ENCODE measurements at regions of chr1 and their contacts with region 1.

Region 1: DNA sequence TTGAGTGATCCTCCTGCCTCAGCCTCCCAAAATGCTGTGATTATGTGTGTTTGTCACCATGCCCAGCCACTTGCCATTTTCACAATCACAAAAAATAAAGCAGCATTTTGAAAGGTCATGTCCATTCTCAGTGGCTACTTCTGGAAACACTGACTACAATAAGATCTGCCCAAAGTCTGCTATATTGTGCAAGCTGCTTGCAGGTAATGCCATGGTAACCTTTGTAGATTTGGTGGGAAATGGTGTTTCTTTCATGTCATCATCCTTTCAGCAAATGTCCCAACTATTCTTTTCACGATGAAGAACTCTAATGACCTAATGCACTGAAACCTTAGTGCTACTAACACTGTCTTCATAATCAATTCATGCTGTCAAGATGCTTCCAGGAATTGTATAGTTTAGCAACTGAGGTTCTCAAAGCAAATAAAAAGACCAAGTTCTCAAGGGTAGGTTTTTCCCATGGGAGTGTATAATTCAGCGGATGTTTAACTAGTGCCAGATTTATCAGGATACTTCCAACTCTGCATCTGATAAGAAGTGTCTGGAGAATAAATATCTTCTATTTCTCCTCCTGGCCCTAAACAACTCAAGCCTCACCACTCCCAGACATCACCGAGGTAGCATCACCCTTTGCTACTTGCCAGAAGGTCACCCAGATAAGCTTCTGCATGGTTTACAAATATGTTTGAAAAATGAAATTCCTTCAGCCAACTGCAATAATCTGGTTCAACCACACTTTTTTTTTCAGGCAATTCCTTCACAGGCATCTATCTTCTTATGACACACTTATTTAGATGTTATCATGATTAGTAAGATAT is 132.0 kb upstream of the ZC3H11B start:
- DNase-seq: no peak
- ATAC-seq: no peak
- H3K4me3 ChIP-seq: no peak overlapping the region
- H3K27ac ChIP-seq: no peak overlapping the region
- H3K4me1 ChIP-seq: no peaks in the 10 kb centered on the region
- H3K27me3 ChIP-seq: no peaks in the 10 kb centered on the region
- CTCF ChIP-seq: no peak

Region 2: DNA sequence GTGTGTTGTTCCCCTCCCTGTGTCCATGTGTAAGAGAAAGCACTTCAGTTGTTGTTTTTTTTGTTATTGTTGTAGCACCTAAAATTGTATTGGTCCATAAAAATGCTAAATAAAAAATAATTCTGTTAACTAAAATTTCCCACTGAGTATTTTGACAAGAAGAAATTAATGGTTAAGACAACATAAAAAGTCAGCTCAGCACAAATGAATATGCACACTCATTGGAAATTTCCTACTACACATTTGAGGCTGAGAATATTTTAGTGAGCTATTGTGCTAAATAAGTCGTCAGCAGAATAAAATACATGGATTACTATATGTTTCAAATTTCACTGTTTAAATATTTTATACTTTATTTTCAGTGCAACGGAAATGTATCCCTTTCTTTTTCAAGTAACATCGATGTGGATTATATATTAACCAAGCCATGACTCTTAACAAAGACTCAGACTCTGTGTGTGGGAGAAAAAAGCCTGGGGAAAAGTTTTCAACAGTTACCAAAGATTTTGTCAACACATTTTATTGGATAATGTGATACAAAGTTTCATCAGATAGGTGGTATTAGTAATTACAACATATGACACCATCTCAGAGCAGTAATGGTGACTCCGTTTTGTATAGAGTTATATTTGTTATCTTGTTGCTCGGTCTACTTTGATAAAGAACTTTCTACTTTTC is 507.8 kb before region 1 on chr1:
- CTCF ChIA-PET with region 1: no interaction called
- POLR2A ChIA-PET with region 1: interaction called, 10 read pairs
- intact Hi-C with region 1: no loop called
- DNase-seq: no peak
- ATAC-seq: no peak
- H3K4me3 ChIP-seq: no peak overlapping the region
- H3K27ac ChIP-seq: no peak overlapping the region
- H3K4me1 ChIP-seq: no peaks in the 10 kb centered on the region
- H3K27me3 ChIP-seq: no peaks in the 10 kb centered on the region
- CTCF ChIP-seq: no peak